Activated naive CD4-positive, alpha-beta T cell treated with anti-CD3 and anti-CD28 coated beads for 36 hours (primary cell): ENCODE measurements at regions of chr11 and their contacts with region 1.

Region 1: DNA sequence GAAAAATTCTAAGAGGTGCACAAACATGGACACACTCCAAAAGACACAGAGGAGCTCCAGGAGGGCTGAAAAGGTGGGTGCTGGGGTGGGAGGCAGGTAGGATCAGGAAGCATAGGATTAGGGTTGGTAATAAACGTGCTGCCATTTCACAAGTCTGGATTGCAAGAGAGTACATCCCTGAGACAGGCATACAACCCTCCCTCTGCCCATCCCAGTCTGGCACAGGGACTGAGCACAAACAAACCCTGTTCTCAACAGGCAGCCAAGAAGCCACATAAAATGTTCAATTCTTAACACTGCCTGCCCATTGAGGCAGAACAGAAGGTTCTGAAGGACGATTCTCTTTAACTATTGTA is 18.5 kb downstream of the SLC35F2 start:
- DNase-seq: no peak
- H3K4me3 Mint-ChIP-seq: no peak overlapping the region
- H3K27ac Mint-ChIP-seq: peak overlapping the region; percentile 93
- H3K4me1 Mint-ChIP-seq: peaks cover 68% of the 10 kb centered on the region
- H3K27me3 Mint-ChIP-seq: no peaks in the 10 kb centered on the region

Region 2: DNA sequence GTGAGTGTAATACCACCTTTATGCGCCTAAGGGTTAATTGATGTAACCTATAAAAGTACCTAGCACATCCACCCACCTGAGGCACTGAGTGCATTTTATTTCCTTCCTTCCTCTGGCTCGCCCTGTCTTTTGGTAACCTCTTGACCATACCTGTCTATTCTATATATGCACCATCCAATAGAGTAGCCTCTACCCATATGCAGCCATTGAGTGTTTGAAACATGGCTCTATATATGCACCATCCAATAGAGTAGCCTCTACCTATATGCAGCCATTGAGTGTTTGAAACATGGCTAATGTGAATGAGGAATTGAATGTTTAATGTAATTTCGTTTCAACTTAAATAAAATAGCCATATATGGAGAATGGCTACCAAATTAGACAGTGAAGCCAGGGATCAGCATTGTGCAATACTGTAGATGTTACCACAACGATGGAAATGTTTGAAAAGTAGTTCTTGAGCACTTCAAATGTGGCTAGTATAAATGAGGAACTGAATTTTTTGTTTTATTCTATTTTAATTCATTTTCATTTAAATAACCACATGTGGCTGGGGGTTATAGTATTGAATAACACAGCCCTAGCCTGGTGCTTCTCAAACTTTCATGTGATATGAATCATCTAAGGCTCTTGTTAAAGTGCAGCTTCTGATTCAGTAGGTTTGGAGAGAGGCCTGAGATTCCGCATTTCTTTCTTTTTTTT is 15.3 kb before region 1 on chr11:
- CTCF ChIA-PET with region 1: interaction called, 3 read pairs
- intact Hi-C with region 1: loop called (anchors 1 kb)
- DNase-seq: no peak
- H3K4me3 Mint-ChIP-seq: no peak overlapping the region
- H3K27ac Mint-ChIP-seq: no peak overlapping the region
- H3K4me1 Mint-ChIP-seq: peaks cover 24% of the 10 kb centered on the region
- H3K27me3 Mint-ChIP-seq: no peaks in the 10 kb centered on the region

Region 3: GRCh38 chr11:107916671-107917241 is 76.6 kb after region 1 on chr11:
- CTCF ChIA-PET with region 1: no interaction called
- intact Hi-C with region 1: no loop called
- DNase-seq: peak; percentile 43
- H3K4me3 Mint-ChIP-seq: no peak overlapping the region
- H3K27ac Mint-ChIP-seq: no peak overlapping the region
- H3K4me1 Mint-ChIP-seq: no peaks in the 10 kb centered on the region
- H3K27me3 Mint-ChIP-seq: peaks cover 2% of the 10 kb centered on the region

Region 4: DNA sequence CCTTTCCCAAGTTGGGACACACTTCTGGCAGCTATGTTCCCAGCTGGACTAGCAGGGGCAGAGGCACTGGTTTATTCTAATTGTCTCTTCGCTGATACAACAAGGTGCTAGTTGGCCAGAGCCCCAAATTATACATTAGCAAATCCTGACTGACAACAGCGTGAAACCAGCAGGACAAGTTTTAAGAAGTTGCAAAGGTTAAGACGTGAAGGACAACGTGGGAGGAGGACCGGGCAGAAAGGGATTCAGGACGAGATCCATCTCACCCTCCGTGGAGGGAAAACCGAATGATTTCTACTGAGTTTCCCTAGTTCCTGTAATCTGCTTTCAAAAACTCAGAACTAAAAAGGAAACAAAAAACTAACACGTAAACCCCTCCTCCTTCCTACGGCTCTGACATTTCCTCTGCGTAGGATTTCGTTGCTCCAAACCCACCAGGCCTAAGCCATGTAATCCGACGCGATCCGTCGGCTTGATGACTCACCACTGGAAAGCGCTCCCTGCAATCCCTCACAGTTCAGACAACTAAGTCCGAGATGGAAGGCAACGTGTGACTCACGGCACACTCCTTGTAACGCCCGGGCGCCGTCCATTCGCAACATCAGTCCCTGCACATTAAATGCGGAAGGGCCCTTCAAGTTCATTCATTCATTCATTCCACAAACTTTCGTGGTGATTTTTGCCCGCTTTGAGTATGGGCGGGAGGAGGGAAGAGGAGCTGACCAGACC is 657.4 kb after region 1 on chr11:
- CTCF ChIA-PET with region 1: no interaction called
- intact Hi-C with region 1: loop called (anchors 5 kb)
- DNase-seq: peak; percentile 84
- H3K4me3 Mint-ChIP-seq: peak overlapping the region; percentile 85
- H3K27ac Mint-ChIP-seq: peak overlapping the region; percentile 92
- H3K4me1 Mint-ChIP-seq: peaks cover 16% of the 10 kb centered on the region
- H3K27me3 Mint-ChIP-seq: no peaks in the 10 kb centered on the region

Region 5: DNA sequence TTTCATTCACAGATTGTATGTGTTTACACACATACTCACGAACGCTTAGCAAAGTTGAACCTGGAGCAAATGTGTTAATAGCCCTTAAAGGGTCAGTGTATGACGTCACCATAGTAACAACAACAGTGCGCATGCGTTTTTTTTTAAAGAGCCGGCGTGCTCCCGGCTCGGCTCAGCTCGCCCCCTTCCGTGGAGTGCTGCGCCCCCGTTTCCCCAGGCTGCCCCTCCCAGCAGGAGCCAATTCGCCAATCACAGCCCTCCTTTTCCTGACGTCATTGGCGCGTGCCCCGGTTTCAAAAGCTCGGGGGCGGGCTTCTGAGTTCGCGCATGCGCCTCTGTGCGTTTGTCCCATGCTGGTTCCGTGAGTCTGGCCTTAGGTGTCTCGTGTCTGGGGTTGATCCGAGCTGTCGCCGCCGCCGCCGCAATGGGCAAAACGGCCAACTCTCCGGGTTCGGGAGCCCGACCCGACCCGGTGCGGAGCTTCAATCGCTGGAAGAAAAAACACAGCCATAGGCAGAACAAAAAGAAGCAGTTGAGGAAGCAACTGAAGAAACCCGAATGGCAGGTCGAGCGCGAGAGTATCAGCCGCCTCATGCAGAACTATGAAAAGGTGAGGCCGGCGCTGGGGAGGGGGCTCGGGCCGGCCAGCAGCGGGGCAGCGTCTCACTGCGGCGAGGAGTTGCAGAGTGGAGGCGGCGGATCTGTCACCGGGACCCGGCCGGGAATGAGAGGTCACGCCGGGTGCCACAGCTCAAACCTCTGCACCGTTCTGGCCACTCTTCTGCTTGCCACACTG is 824.8 kb after region 1 on chr11 and contains the start of gene DDX10:
- CTCF ChIA-PET with region 1: no interaction called
- intact Hi-C with region 1: loop called (anchors 5 kb)
- DNase-seq: peak; percentile 99
- H3K4me3 Mint-ChIP-seq: peak within 1 kb of the TSS; percentile 99
- H3K27ac Mint-ChIP-seq: peak within 1 kb of the TSS; percentile 86
- H3K4me1 Mint-ChIP-seq: peaks cover 38% of the 10 kb centered on the region
- H3K27me3 Mint-ChIP-seq: no peaks in the 10 kb centered on the region
- total RNA-seq, gene DDX10: 36.6 to 43.0 TPM